CD4-positive, alpha-beta T cell (primary cell): ENCODE measurements at regions of chr9 and their contacts with region 1.

Region 1: GRCh38 chr9:114291064-114291474 is 31.8 kb upstream of the ORM1 start:
- DNase-seq: peak; percentile 50 to 81 (median 64)
- ATAC-seq: no peak
- H3K4me3 ChIP-seq: no peak overlapping the region
- H3K4me3 Mint-ChIP-seq: no peak overlapping the region
- H3K27ac ChIP-seq: no peak overlapping the region
- H3K27ac Mint-ChIP-seq: no peak overlapping the region
- H3K4me1 ChIP-seq: peaks cover 3% of the 10 kb centered on the region
- H3K4me1 Mint-ChIP-seq: no peaks in the 10 kb centered on the region
- H3K27me3 ChIP-seq: no peaks in the 10 kb centered on the region
- H3K27me3 Mint-ChIP-seq: peaks cover 6% of the 10 kb centered on the region
- CTCF ChIP-seq: peak; percentile 94

Region 2: GRCh38 chr9:114082017-114082762 is 208.9 kb before region 1 on chr9:
- CTCF ChIA-PET with region 1: interaction called, 3 read pairs
- POLR2A ChIA-PET with region 1: no interaction called
- intact Hi-C with region 1: loop called (anchors 1 kb)
- DNase-seq: peak; percentile 53 to 84 (median 72)
- ATAC-seq: peak; percentile 59
- H3K4me3 ChIP-seq: no peak overlapping the region
- H3K4me3 Mint-ChIP-seq: no peak overlapping the region
- H3K27ac ChIP-seq: no peak overlapping the region
- H3K27ac Mint-ChIP-seq: no peak overlapping the region
- H3K4me1 ChIP-seq: no peaks in the 10 kb centered on the region
- H3K4me1 Mint-ChIP-seq: no peaks in the 10 kb centered on the region
- H3K27me3 ChIP-seq: no peaks in the 10 kb centered on the region
- H3K27me3 Mint-ChIP-seq: peaks cover 16% of the 10 kb centered on the region
- CTCF ChIP-seq: peak; percentile 84

Region 3: DNA sequence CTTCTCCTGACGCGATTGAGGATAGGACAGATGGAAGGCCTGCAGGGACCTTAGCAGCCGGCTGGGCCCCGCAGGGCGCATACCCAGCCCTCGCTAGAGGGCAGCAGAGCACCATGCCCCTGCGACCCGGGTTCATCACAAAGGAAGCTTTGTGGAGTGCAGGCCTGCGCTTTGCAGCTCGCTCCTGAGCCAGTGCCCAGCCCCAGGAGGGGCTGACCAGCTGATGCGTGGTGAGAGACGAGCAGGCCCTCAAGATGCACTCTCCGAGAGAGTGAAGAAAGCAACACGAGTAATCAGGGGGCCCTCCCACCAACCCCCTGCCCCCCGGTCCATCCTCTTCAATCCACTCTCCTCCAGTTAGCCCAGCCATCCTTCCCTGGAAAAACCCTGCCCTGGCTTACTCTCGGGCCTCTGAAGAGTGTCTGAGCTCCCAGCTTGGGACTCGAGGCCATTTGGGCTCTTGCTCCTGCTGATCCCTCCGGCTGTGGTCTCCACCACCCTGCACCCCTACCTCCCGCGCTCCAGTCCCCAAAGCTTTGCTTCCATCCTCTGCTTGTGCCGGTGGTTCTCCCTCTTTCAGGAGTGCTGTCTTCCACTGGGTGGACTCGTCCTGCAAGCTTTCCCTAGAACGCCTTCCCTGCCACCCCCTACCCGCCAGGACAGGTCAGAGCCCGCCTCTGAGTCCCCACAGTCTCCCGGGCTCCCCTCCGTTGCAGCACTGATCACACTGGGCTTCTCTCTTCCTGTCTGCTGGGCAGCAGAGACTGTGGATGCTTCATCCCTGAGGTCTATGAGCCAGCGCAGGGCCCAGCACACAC is 182.8 kb before region 1 on chr9:
- CTCF ChIA-PET with region 1: no interaction called
- POLR2A ChIA-PET with region 1: no interaction called
- intact Hi-C with region 1: loop called in 1 of 2 experiments (anchors 2 kb)
- DNase-seq: peak in 13 of 14 experiments; percentile 8 to 65 (median 31)
- ATAC-seq: no peak
- H3K4me3 ChIP-seq: no peak overlapping the region
- H3K4me3 Mint-ChIP-seq: no peak overlapping the region
- H3K27ac ChIP-seq: no peak overlapping the region
- H3K27ac Mint-ChIP-seq: no peak overlapping the region
- H3K4me1 ChIP-seq: no peaks in the 10 kb centered on the region
- H3K4me1 Mint-ChIP-seq: no peaks in the 10 kb centered on the region
- H3K27me3 ChIP-seq: peaks cover 0 to 8% of the 10 kb centered on the region in 2 experiments
- H3K27me3 Mint-ChIP-seq: peaks cover 8% of the 10 kb centered on the region
- CTCF ChIP-seq: peak; percentile 61

Region 4: GRCh38 chr9:114155263-114155972 is 135.7 kb before region 1 on chr9 and contains the start of gene COL27A1:
- CTCF ChIA-PET with region 1: interaction called, 5 read pairs
- POLR2A ChIA-PET with region 1: no interaction called
- intact Hi-C with region 1: loop called (anchors 1 kb)
- DNase-seq: peak; percentile 56 to 84 (median 70)
- ATAC-seq: peak; percentile 83
- H3K4me3 ChIP-seq: peak within 1 kb of the TSS; percentile 54
- H3K4me3 Mint-ChIP-seq: peak within 1 kb of the TSS; percentile 93
- H3K27ac ChIP-seq: no peak within 1 kb of the TSS
- H3K27ac Mint-ChIP-seq: no peak within 1 kb of the TSS
- H3K4me1 ChIP-seq: peaks cover 27% of the 10 kb centered on the region
- H3K4me1 Mint-ChIP-seq: peaks cover 28% of the 10 kb centered on the region
- H3K27me3 ChIP-seq: peaks cover 39 to 48% of the 10 kb centered on the region in 2 experiments
- H3K27me3 Mint-ChIP-seq: peaks cover 56% of the 10 kb centered on the region
- CTCF ChIP-seq: peak; percentile 84
- total RNA-seq, gene COL27A1: 0.87 to 1.2 TPM